Esophagus muscularis mucosa (tissue), 4 donors: ENCODE measurements at regions of chr20 and their contacts with region 1.

Region 1: DNA sequence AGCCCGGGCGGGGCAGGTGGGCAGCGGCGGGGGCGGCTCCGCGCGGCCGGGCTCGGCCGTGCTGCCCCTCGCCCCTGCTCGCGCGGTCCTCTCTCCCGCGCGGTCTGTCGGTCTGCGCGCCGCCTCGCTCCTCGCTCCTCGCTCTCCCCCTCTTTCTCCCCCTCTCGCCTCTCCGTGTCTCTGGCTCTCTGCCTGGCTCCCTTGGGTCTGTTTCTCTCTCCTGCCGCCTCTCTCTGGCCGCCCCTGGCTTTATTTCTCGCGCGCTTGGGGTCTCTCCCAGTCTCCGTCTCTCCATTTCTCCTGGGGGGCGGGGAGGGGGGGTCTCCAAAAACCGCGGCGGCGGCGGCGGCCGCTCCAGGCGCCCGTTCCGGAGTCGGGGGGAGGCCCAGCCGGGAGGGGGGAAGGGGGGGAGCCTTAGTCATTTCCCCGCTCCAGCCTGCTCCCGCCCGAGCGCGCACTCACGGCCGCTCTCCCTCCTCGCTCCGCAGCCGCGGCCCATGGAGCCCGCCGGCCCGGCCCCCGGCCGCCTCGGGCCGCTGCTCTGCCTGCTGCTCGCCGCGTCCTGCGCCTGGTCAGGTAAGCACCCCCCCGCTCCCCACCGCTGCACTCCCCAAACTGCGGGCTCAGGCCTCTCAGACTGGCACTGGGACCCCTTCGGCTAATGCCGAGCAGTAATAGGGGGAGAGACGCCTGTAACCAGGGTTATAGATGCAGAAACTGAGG is at the start of gene SIRPA:
- DNase-seq: peak; percentile 93
- H3K4me3 ChIP-seq: peak within 1 kb of the TSS; percentile 77 to 93 (median 82)
- H3K27ac ChIP-seq: peak within 1 kb of the TSS; percentile 91 to 96 (median 96)
- H3K4me1 ChIP-seq: peaks cover 22 to 70% (median 66%) of the 10 kb centered on the region in 4 donors
- H3K27me3 ChIP-seq: no peaks in the 10 kb centered on the region
- CTCF ChIP-seq: no peak
- EP300 ChIP-seq: no peak
- POLR2A ChIP-seq: peak; percentile 18
- total RNA-seq, gene SIRPA: 19.5 to 39.8 (median 32.5) TPM

Region 2: DNA sequence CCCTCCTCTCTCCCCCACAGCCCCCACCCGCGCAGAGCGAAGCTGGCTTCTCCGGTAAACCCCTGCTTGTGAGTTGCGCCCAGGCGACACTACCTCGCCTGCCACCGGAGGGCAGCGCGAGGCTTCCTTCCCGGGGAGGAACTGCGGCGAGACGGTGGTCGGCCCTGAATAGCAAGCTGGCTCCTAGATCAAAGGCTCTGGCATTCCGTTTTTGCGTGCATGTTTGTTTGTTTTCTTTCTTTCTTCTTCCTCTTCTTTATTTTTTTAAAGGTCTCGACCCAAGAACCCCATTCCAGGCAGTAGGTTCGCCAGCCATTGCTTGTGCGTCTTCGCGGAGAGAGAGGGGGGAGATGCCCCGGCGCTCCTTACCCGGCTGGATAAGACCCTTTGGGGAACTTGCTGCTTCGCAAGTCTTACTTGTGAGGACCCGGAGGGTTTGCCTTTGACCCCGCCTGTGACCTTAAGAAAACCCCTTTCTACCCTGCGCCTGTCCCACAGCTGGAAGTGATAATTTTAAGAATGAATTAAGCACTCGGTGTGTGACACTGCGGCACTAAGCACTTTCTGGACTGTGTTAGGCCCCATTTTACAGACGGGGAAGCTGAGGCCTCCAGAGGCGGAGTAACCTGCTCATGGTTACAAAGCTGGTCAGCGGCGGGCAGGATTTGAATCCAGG is 92.6 kb before region 1 on chr20:
- intact Hi-C with region 1: loop called (anchors 2 kb)
- DNase-seq: no peak
- H3K4me3 ChIP-seq: peak overlapping the region; percentile 56 to 66 (median 64)
- H3K27ac ChIP-seq: peak overlapping the region; percentile 52 to 80 (median 60)
- H3K4me1 ChIP-seq: peaks cover 12 to 31% (median 29%) of the 10 kb centered on the region in 4 donors
- H3K27me3 ChIP-seq: no peaks in the 10 kb centered on the region
- CTCF ChIP-seq: peak; percentile 50 to 80 (median 64)
- EP300 ChIP-seq: no peak
- POLR2A ChIP-seq: no peak

Region 3: GRCh38 chr20:1844325-1845162 is 50.6 kb before region 1 on chr20:
- intact Hi-C with region 1: no loop called
- DNase-seq: no peak
- H3K4me3 ChIP-seq: no peak overlapping the region
- H3K27ac ChIP-seq: peak overlapping the region; percentile 34 to 66 (median 46)
- H3K4me1 ChIP-seq: peaks cover 4 to 42% (median 38%) of the 10 kb centered on the region in 4 donors
- H3K27me3 ChIP-seq: no peaks in the 10 kb centered on the region
- CTCF ChIP-seq: no peak
- EP300 ChIP-seq: no peak
- POLR2A ChIP-seq: no peak